ENCODE measurements at regions of chr14 and their contacts with region 1.

Region 1: GRCh38 chr14:35320472-35320871 is 28.3 kb downstream of the PSMA6 start:
- DNase-seq: no peak
- H3K4me3 Mint-ChIP-seq: no peak overlapping the region
- H3K27ac Mint-ChIP-seq: no peak overlapping the region
- H3K4me1 Mint-ChIP-seq: peaks cover 4% of the 10 kb centered on the region
- H3K27me3 Mint-ChIP-seq: no peaks in the 10 kb centered on the region

Region 2: DNA sequence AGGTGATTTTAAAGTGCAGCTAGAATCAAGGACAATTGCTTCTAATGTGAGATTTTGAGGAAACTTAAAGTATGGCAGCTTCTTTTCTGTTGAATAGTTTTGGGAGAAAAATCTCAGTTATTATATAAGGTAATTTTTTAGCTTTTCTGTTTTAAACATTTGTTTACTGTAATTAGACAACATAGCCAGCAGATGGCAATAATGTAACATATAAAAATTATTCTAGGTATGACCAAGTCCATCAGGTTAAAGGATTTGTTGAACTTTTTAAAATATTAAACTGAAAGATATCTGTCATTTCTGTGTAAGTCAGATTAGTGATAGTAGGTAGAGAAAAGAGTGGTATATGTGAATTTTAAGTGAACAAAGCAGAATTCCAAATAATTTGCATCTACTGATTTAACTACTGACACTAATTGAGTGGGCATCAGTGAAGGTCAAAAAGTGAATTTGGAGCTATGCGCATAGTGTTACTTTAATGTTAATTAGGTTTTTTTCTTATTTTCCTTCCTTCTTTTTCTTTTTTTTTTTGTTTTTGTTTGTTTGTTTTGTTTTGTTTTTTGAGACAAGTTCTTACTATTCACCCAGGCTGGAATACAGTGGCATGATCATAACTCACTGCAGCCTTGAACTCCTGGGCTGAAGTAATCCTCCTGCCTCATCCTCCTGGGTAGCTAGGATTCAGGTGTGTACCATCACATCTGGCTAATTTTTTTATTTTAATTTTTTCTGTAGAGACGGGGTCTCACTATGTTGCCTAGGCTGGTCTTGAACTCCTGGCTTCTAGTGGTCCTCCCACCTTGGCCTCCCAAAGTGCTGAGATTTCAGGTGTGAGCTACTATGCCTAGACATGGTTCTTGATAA is 179.5 kb before region 1 on chr14:
- intact Hi-C with region 1: loop called (anchors 5 kb)
- DNase-seq: no peak
- H3K4me3 Mint-ChIP-seq: no peak overlapping the region
- H3K27ac Mint-ChIP-seq: no peak overlapping the region
- H3K4me1 Mint-ChIP-seq: peaks cover 21% of the 10 kb centered on the region
- H3K27me3 Mint-ChIP-seq: no peaks in the 10 kb centered on the region

Region 3: DNA sequence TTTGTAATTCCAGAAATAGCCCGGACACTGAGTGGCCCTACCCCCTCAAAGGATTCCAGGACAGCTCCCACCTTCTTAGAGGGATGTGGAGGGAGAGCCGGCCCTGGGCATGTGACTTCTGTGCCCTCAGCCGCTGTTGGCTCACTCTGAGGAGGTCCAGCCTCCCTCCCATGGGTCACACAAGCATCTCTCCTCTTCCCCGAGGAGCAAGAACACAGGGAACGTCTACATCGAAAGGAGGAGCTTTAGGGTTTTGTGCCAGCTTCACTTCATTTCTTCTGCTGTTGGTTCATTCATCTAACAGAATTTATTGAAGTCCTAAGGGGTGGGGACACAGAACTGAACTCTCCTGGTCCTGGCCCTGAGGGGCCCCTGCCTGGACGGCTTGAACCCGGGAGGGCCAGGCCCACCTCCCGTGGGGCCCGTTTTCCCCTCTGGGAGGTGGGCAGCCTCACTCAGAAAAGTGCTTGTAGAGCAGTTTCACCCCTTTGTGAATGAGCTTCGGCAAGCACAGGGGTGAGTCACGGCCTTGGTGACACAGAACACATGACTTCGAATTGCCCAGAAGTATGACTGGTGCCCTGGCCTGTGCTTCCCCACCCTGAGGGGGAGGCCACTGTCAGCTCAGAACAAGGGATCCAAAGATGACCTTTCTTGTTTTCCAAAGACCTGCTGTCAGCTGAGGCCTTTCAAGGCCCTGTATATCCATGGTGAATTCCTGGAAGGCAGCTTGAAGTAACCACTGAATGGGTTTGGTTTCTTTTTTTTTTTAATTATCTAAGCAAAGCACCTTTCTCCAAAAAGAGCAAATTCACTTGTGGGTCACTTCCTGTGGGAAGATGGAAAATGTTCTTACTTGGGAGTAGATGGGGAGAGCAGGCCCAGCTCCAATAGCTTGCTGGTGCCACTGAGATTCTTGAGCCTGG is 44.9 kb after region 1 on chr14:
- intact Hi-C with region 1: loop called (anchors 1 kb)
- DNase-seq: peak; percentile 38
- H3K4me3 Mint-ChIP-seq: peak overlapping the region; percentile 64
- H3K27ac Mint-ChIP-seq: peak overlapping the region; percentile 97
- H3K4me1 Mint-ChIP-seq: peaks cover 42% of the 10 kb centered on the region
- H3K27me3 Mint-ChIP-seq: no peaks in the 10 kb centered on the region

Region 4: GRCh38 chr14:35423621-35424020 is 103.1 kb after region 1 on chr14:
- intact Hi-C with region 1: no loop called
- DNase-seq: no peak
- H3K4me3 Mint-ChIP-seq: no peak overlapping the region
- H3K27ac Mint-ChIP-seq: no peak overlapping the region
- H3K4me1 Mint-ChIP-seq: peaks cover 16% of the 10 kb centered on the region
- H3K27me3 Mint-ChIP-seq: no peaks in the 10 kb centered on the region

Region 5: GRCh38 chr14:35727764-35728163 is 407.3 kb after region 1 on chr14:
- intact Hi-C with region 1: no loop called
- DNase-seq: no peak
- H3K4me3 Mint-ChIP-seq: no peak overlapping the region
- H3K27ac Mint-ChIP-seq: no peak overlapping the region
- H3K4me1 Mint-ChIP-seq: peaks cover 10% of the 10 kb centered on the region
- H3K27me3 Mint-ChIP-seq: no peaks in the 10 kb centered on the region

Measured in activated T-helper 2 cell treated with anti-CD3 and anti-CD28 coated beads, Interferon-gamma antibody, Interleukin-2, Interleukin-4, amounts not matched to agents 10 μg/mL and 5 μg/mL and 100 μg/mL, durations not matched to agents 14 hours and 24 hours and 36 hours (primary cell).